Natural killer cell (primary cell): ENCODE measurements at regions of chr22 and their contacts with region 1.

Region 1: DNA sequence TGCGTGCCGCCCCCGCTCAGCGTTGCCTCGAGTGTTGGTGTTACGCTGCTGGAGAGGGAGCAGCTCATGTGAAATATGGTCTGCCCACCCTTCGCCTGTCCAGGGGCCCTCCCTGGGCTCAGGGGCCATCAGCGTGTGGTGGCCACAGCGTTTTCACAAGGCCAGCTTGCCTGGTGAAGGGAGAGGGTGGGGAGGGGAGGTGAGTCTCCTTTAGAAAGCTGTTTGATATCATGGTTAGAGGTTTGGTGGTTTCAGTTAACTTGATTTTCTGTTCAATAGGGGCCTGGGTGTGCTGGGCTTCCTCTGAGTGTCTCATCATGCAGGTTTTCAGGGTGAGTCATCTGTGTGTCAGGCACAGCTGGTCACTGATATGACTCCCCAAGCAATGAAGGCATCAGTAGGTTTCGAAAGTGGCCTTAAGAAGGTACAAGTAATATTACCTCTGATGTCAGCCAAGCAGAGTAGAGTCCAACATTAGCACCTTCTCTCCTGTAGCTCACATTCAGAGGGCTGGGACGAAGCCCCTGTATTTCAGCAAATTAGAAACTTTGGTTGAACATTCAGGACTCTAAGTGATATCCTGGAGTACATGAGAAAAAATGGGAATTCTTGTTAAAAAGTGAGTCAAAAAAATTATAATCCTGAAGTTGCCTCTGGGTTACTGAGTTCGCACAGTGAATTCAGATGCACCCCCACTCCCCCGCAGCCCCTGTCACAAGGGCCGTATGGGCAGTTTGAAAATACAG is 172.5 kb downstream of the TBC1D22A start:
- DNase-seq: no peak
- ATAC-seq: peak in 2 of 3 donors; percentile 17 to 49
- H3K4me3 ChIP-seq: no peak overlapping the region
- H3K4me3 Mint-ChIP-seq: peak overlapping the region; percentile 28
- H3K27ac ChIP-seq: no peak overlapping the region
- H3K27ac Mint-ChIP-seq: peak overlapping the region; percentile 89 to 91
- H3K4me1 ChIP-seq: peaks cover 25% of the 10 kb centered on the region
- H3K4me1 Mint-ChIP-seq: peaks cover 50 to 55% of the 10 kb centered on the region in 2 donors
- H3K27me3 ChIP-seq: no peaks in the 10 kb centered on the region
- H3K27me3 Mint-ChIP-seq: no peaks in the 10 kb centered on the region
- CTCF ChIP-seq: no peak

Region 2: DNA sequence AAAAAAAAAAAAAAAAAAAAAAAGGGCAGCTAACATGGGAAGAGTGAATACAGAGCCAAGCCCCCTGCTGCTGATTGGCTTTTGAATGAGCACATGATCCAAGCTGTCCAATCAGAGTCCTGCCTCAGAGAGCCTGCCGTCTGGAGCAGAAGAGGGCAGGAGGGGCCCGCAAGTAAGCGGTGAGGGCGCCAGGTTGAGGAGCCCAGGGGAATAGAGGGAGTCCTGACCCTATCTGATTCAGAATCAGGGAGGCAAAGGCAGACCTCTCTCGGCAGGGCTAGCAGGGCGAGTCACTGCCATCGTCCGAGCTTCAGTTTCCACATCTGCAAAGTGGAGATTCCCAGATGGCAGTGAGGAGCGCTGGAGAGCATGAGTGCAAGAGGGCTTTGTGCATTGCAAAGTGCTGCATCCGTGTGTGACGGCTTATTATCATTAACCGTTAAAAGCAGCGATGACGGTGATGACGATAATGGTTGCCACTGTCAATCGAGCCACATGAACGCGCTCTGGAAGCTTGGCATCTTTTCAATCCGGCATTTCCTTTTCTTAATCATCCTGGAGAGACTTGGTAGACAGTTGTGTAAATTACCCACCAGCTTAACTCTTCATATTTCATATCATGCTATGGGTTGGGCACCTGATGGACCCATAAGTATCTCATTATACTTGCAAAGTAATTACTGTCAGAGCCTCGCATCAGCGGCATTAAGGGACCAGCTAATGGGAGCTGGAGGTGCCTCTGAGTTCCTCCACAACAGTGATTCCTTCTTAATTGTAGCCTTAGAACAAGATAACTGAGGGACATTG is 1331.9 kb before region 1 on chr22:
- intact Hi-C with region 1: loop called (anchors 5 kb)
- DNase-seq: no peak
- ATAC-seq: no peak
- H3K4me3 ChIP-seq: no peak overlapping the region
- H3K4me3 Mint-ChIP-seq: no peak overlapping the region
- H3K27ac ChIP-seq: no peak overlapping the region
- H3K27ac Mint-ChIP-seq: no peak overlapping the region
- H3K4me1 ChIP-seq: peaks cover 1% of the 10 kb centered on the region
- H3K4me1 Mint-ChIP-seq: peaks cover 4 to 5% of the 10 kb centered on the region in 2 donors
- H3K27me3 ChIP-seq: no peaks in the 10 kb centered on the region
- H3K27me3 Mint-ChIP-seq: peaks cover 0 to 5% of the 10 kb centered on the region in 2 donors
- CTCF ChIP-seq: no peak

Region 3: GRCh38 chr22:46894081-46894671 is 40.7 kb before region 1 on chr22:
- intact Hi-C with region 1: no loop called
- DNase-seq: no peak
- ATAC-seq: no peak
- H3K4me3 ChIP-seq: no peak overlapping the region
- H3K4me3 Mint-ChIP-seq: no peak overlapping the region
- H3K27ac ChIP-seq: no peak overlapping the region
- H3K27ac Mint-ChIP-seq: peak overlapping the region in 1 of 2 donors; percentile 22
- H3K4me1 ChIP-seq: no peaks in the 10 kb centered on the region
- H3K4me1 Mint-ChIP-seq: peaks cover 17 to 37% of the 10 kb centered on the region in 2 donors
- H3K27me3 ChIP-seq: no peaks in the 10 kb centered on the region
- H3K27me3 Mint-ChIP-seq: no peaks in the 10 kb centered on the region
- CTCF ChIP-seq: no peak

Region 4: DNA sequence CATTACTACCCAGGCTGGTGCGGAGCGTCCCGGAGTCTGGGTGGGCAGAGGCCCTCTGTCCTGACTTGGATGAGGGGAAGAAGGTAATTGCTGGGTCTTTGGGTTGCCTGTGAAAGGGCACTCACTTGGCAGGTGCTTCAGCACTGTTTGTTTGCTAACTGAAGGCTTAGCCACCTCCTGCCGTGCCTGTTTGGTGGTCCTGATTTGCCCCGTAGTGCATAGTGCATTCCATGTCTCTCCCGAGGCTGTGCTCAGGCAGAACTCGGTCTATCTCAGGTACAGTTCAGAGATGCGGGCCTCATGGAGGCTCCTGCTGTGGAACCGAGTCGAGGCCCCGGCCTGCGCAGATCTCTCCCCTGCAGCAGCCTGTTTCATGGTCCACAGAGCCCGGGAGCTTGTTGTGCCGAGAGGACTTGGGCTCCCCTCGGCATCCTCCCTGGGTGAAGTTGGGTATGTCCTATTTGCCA is 26.2 kb before region 1 on chr22:
- intact Hi-C with region 1: no loop called
- DNase-seq: no peak
- ATAC-seq: no peak
- H3K4me3 ChIP-seq: no peak overlapping the region
- H3K4me3 Mint-ChIP-seq: no peak overlapping the region
- H3K27ac ChIP-seq: no peak overlapping the region
- H3K27ac Mint-ChIP-seq: no peak overlapping the region
- H3K4me1 ChIP-seq: no peaks in the 10 kb centered on the region
- H3K4me1 Mint-ChIP-seq: peaks cover 15 to 30% of the 10 kb centered on the region in 2 donors
- H3K27me3 ChIP-seq: no peaks in the 10 kb centered on the region
- H3K27me3 Mint-ChIP-seq: no peaks in the 10 kb centered on the region
- CTCF ChIP-seq: no peak

Region 5: DNA sequence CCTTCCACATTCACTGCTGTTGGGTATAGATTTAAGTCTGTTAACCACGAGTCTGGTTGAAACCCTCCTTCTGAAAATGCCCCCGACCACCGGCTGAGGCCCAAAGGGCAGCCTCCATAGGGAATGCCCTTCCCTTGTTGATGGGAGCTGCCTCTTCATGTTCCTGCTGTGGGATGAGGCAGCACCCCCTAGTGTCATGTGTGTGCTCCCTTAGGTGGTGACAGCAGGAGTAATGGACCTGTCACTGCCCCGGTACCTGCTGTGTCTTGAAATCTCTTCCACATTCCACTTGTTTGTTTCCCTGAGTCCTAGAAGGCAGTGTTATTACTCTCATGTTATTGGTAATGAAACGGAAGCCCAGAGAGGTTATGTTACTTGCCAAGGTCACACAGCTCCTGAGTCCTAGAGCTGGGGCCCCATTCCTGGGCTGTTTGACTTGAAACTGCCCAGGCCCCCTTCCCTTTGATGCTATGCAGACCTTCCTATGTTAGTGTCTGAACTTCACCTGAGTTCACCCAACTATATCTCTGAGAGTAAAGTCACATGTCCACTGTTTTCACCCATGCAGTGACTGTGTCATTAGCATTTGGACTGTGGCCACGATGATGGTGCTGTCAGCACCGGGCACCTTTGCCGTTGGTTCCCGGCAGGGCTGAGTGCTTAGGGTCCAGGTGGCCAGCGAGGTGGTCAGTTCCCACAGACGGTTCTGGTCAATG is 61.8 kb after region 1 on chr22:
- intact Hi-C with region 1: no loop called
- DNase-seq: no peak
- ATAC-seq: no peak
- H3K4me3 ChIP-seq: no peak overlapping the region
- H3K4me3 Mint-ChIP-seq: no peak overlapping the region
- H3K27ac ChIP-seq: no peak overlapping the region
- H3K27ac Mint-ChIP-seq: peak overlapping the region in 1 of 2 donors; percentile 36
- H3K4me1 ChIP-seq: no peaks in the 10 kb centered on the region
- H3K4me1 Mint-ChIP-seq: peaks cover 19 to 20% of the 10 kb centered on the region in 2 donors
- H3K27me3 ChIP-seq: no peaks in the 10 kb centered on the region
- H3K27me3 Mint-ChIP-seq: no peaks in the 10 kb centered on the region
- CTCF ChIP-seq: no peak